Calu3 (cell line): ENCODE measurements at regions of chr3 and their contacts with region 1.

Region 1: DNA sequence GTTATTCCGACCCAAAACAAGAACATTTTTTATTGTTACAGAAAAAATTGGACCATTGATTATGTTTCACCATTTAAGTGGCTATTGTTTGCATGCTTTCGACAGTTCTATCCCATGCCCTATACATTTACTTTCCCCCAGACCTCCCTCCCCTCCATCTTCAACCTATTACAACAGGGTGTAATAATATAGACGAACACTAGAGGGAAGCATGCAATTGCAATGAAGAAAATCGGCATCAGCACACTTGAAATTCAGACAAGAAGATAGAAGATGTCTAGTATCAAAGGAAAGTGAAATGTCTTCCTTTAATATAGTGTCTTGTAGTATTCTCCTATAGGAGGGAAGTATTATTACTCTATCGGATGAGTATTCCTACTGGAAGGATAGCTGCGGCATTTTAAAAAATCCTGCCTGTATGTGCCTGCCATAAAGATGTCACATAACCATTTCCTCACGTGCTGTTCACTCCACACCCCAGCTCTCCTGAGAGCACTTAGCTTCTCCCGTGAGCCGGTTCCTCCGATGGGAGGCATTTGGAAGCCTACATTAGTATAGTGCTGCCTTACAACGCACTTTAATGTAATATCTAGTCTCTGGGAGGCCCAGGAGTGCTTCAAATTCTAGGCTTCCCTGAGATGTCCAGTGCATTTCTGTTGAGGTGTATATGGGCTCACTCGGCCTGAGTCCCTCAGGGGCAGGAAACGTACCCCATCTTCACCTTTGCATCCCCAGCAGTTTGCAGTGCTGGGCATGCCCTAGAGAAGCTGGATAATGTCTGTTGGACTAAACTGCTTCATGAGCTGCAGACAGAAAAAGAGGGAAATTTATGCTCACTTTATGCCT is 17.8 kb upstream of the ERICH6 start:
- DNase-seq: no peak
- H3K4me3 Mint-ChIP-seq: no peak overlapping the region
- H3K27ac Mint-ChIP-seq: no peak overlapping the region
- H3K4me1 Mint-ChIP-seq: peaks cover 18% of the 10 kb centered on the region
- H3K27me3 Mint-ChIP-seq: no peaks in the 10 kb centered on the region
- CTCF ChIP-seq: peak; percentile 85

Region 2: GRCh38 chr3:150610790-150611189 is 110.7 kb before region 1 on chr3:
- CTCF ChIA-PET with region 1: interaction called, 13 read pairs
- intact Hi-C with region 1: no loop called
- DNase-seq: no peak
- H3K4me3 Mint-ChIP-seq: no peak overlapping the region
- H3K27ac Mint-ChIP-seq: no peak overlapping the region
- H3K4me1 Mint-ChIP-seq: peaks cover 45% of the 10 kb centered on the region
- H3K27me3 Mint-ChIP-seq: no peaks in the 10 kb centered on the region
- CTCF ChIP-seq: no peak

Region 3: DNA sequence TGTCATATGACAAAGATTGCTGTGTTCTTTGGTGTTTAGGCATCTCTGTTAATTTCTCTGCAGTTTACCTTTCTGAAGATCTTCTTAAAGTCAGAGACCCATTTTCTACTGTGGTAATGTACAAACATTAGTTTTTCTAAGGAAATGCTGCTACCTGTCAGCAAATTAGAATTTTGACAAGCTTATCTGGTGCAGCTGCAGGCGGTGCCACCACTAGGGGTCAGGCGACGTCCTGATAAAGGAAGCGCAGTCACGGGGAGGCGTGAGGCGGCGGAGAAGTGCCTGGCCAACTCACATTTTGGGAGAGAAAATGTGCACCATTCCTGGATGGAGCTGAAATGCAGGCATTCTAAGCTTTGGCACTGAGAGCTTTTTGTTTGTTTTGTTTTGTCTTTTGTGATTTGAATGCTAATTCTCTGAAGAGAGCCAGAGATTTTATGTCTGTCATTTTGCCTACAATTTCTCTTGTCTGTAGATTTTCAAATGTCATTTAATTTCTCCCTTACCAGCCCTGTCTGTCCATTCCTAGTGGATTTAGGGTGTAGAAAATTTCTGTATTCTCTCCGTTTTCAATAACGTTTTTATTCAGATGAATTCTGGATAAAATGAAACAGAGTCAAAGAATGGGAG is 66.3 kb after region 1 on chr3:
- CTCF ChIA-PET with region 1: no interaction called
- intact Hi-C with region 1: loop called (anchors 1 kb)
- DNase-seq: peak; percentile 95
- H3K4me3 Mint-ChIP-seq: no peak overlapping the region
- H3K27ac Mint-ChIP-seq: no peak overlapping the region
- H3K4me1 Mint-ChIP-seq: no peaks in the 10 kb centered on the region
- H3K27me3 Mint-ChIP-seq: no peaks in the 10 kb centered on the region
- CTCF ChIP-seq: peak; percentile 98

Region 4: GRCh38 chr3:150925751-150926201 is 204.3 kb after region 1 on chr3:
- CTCF ChIA-PET with region 1: no interaction called
- intact Hi-C with region 1: loop called (anchors 1 kb)
- DNase-seq: peak; percentile 87
- H3K4me3 Mint-ChIP-seq: no peak overlapping the region
- H3K27ac Mint-ChIP-seq: no peak overlapping the region
- H3K4me1 Mint-ChIP-seq: no peaks in the 10 kb centered on the region
- H3K27me3 Mint-ChIP-seq: peaks cover 63% of the 10 kb centered on the region
- CTCF ChIP-seq: peak; percentile 95